Heart right ventricle (tissue), 16 donors: ENCODE measurements at regions of chr14 and their contacts with region 1.

Region 1: GRCh38 chr14:20855652-20856291 is 35.4 kb upstream of the RNASE3 start:
- DNase-seq: peak in 1 of 2 donors; percentile 57
- ATAC-seq: peak; percentile 82 to 96 (median 90)
- H3K4me3 ChIP-seq: no peak overlapping the region
- H3K27ac ChIP-seq: no peak overlapping the region
- H3K4me1 ChIP-seq: peaks cover 0 to 7% (median 0%) of the 10 kb centered on the region in 9 donors
- H3K27me3 ChIP-seq: peaks cover 0 to 22% (median 9%) of the 10 kb centered on the region in 7 donors
- CTCF ChIP-seq: peak; percentile 55 to 82 (median 77)

Region 2: DNA sequence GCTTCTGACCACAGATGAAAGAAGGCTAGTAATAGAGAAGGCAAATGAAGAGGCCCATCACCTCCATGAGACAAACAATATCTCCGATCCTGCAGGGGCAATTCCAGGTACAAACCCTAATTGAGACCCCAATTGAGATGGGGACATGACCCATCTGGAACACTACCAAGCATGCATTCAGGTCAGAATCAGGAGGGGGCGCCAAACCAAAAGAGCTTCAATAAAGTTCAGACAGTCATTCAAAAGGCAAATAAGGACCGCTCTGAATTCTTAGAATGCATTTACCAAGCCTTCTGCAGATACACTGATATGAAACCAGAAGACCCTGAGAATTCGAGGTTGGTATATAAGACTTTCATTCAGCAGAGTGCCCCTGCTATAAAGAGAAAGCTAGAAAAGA is 97.8 kb before region 1 on chr14:
- intact Hi-C with region 1: loop called in 9 of 10 experiments (anchors 2 to 10 kb)
- DNase-seq: peak in 1 of 2 donors; percentile 34
- ATAC-seq: peak in 1 of 8 donors; percentile 61
- H3K4me3 ChIP-seq: no peak overlapping the region
- H3K27ac ChIP-seq: no peak overlapping the region
- H3K4me1 ChIP-seq: peaks cover 0 to 9% (median 0%) of the 10 kb centered on the region in 9 donors
- H3K27me3 ChIP-seq: no peaks in the 10 kb centered on the region
- CTCF ChIP-seq: peak in 7 of 9 donors; percentile 43 to 67 (median 48)

Region 3: GRCh38 chr14:20781803-20782202 is 74.0 kb before region 1 on chr14:
- intact Hi-C with region 1: no loop called
- DNase-seq: no peak
- ATAC-seq: peak in 5 of 8 donors; percentile 15 to 54 (median 25)
- H3K4me3 ChIP-seq: peak overlapping the region in 7 of 10 donors; percentile 11 to 51 (median 33)
- H3K27ac ChIP-seq: peak overlapping the region in 8 of 10 donors; percentile 9 to 92 (median 54)
- H3K4me1 ChIP-seq: peaks cover 0 to 47% (median 21%) of the 10 kb centered on the region in 9 donors
- H3K27me3 ChIP-seq: no peaks in the 10 kb centered on the region
- CTCF ChIP-seq: no peak

Region 4: DNA sequence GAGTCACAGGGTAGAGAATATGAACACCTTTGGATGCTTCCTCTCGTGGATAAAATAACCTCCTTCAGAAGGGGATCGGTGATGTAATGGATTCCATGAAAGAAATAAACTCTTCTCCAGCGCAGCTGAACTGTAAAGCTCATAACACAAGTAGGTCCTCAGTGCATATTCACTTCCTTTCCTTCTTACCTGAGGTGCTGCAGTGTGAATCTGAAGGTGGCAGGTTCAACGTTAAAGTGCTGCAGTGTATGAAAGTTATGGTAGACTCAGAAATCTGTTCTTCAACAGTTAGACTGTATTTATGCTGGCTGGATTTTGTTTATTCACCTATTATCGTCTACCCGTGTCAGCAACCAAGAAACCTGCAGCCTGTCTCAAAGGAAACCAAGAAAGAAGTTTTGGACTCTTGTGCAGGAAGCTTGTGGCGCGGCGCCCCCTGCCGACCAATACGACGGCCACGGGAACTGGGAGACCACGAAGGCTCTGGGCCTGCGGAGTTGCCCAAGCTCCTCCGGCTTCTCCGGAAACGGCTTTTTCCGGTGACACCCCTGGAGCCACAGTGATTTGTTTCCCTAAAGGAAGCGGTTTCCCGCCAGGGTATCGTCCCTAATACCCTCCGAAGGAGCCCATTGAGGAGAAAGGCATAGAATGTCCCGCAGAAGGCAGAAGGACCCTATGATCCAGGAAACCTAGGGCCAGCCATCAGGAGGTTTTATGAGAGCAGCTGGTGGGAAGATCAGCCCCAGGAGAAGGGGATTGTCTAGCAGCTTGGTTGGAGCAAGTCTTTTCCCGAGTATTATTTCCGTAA is 17.8 kb after region 1 on chr14:
- intact Hi-C with region 1: loop called in 1 of 10 experiments (anchors 2 kb)
- DNase-seq: peak; percentile 86 to 88
- ATAC-seq: peak; percentile 89 to 99 (median 97)
- H3K4me3 ChIP-seq: peak overlapping the region in 9 of 10 donors; percentile 0 to 43 (median 34)
- H3K27ac ChIP-seq: peak overlapping the region in 1 of 10 donors; percentile 56
- H3K4me1 ChIP-seq: peaks cover 0 to 13% (median 5%) of the 10 kb centered on the region in 9 donors
- H3K27me3 ChIP-seq: peaks cover 0 to 18% (median 0%) of the 10 kb centered on the region in 7 donors
- CTCF ChIP-seq: peak; percentile 73 to 95 (median 89)

Region 5: GRCh38 chr14:20970983-20971704 is 115.4 kb after region 1 on chr14:
- intact Hi-C with region 1: loop called in 8 of 10 experiments (anchors 1 to 10 kb)
- DNase-seq: peak; percentile 83 to 87
- ATAC-seq: peak; percentile 95 to 98 (median 97)
- H3K4me3 ChIP-seq: peak overlapping the region; percentile 33 to 79 (median 68)
- H3K27ac ChIP-seq: peak overlapping the region in 9 of 10 donors; percentile 41 to 87 (median 69)
- H3K4me1 ChIP-seq: peaks cover 0 to 18% (median 8%) of the 10 kb centered on the region in 9 donors
- H3K27me3 ChIP-seq: peaks cover 0 to 7% (median 0%) of the 10 kb centered on the region in 7 donors
- CTCF ChIP-seq: peak; percentile 70 to 91 (median 78)

Region 6: GRCh38 chr14:21103710-21104447 is 248.1 kb after region 1 on chr14:
- intact Hi-C with region 1: loop called in 4 of 10 experiments (anchors 5 to 10 kb)
- DNase-seq: peak; percentile 94 to 97
- ATAC-seq: peak; percentile 95 to 98 (median 97)
- H3K4me3 ChIP-seq: peak overlapping the region; percentile 50 to 80 (median 64)
- H3K27ac ChIP-seq: peak overlapping the region; percentile 90 to 99 (median 97)
- H3K4me1 ChIP-seq: peaks cover 6 to 58% (median 42%) of the 10 kb centered on the region in 9 donors
- H3K27me3 ChIP-seq: no peaks in the 10 kb centered on the region
- CTCF ChIP-seq: peak; percentile 70 to 92 (median 81)

Region 7: DNA sequence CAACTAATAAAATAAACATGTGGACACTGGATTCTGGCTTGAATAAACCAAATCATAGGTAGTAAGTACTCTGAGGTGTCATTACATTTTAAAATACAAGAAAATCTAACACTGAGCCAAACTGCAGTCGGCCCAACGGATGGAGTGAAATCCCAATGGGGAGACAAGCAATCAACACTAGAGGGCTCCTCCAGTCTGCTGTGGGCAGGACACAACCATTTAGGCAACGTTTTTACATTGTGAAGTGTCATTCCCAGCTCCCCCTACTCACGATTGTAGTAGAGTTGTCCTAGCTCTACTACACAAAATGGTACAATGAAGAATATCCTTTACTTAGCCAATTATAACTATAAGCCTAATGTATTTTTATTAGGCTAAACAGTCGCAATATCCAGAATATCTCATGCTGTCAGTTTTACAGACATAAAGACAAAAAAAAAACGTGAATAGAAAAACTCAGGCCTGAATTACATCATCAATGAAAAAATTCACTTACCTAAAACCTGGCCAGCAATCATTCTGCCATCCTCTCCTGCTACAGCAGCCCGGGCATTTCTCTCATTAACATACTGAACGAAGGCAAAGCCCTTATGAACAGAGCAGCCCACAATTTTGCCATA is 377.8 kb after region 1 on chr14:
- intact Hi-C with region 1: no loop called
- DNase-seq: no peak
- ATAC-seq: peak in 3 of 8 donors; percentile 50 to 63 (median 54)
- H3K4me3 ChIP-seq: no peak overlapping the region
- H3K27ac ChIP-seq: no peak overlapping the region
- H3K4me1 ChIP-seq: peaks cover 3 to 92% (median 69%) of the 10 kb centered on the region in 9 donors
- H3K27me3 ChIP-seq: no peaks in the 10 kb centered on the region
- CTCF ChIP-seq: peak in 7 of 9 donors; percentile 29 to 57 (median 41)